PC-9 (cell line): ENCODE measurements at regions of chr3 and their contacts with region 1.

Region 1: DNA sequence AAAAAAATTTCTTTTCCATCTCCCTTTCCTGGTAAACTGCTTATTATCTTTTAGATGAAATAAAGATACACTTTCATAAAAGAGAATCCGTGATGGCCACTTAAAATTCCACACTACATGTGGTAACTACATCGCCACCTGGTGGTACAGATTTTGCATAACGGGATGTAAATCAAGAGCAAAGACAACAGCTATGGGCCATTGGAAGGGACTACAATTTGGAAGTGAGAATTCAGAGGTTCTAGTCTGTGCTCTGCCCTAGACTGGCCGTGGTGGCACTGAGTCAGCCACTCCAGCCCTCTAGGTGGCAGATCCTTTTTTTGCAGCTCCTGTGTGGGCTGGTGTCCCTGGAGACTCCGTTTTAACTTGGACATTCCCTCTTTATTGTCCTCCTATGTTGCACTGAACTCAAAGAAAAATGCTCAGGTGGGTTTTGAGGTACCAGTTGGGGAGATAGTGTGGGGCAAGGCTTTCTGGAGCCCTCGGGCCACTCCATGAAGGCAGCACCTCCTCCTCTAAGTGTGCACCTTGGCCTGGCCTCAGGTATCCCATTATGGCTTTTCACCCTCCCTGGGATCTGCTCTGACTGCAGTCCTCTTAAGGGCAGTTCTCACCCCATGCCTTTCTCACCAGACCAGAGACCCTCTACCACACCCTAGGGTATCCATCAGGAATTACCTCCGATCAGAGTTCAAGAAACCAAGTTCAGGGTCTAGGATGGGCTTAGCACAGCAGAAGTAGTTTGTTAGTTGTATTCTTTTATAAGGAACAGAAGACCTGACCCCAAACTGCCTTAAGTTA is 54.9 kb downstream of the SPSB4 start:
- DNase-seq: peak; percentile 44 to 45
- H3K4me3 ChIP-seq: no peak overlapping the region
- H3K27ac ChIP-seq: no peak overlapping the region
- H3K4me1 ChIP-seq: no peaks in the 10 kb centered on the region
- H3K27me3 ChIP-seq: peaks cover 11% of the 10 kb centered on the region; the same call in 1 of the 2 replicates
- CTCF ChIP-seq: peak; percentile 79

Region 2: DNA sequence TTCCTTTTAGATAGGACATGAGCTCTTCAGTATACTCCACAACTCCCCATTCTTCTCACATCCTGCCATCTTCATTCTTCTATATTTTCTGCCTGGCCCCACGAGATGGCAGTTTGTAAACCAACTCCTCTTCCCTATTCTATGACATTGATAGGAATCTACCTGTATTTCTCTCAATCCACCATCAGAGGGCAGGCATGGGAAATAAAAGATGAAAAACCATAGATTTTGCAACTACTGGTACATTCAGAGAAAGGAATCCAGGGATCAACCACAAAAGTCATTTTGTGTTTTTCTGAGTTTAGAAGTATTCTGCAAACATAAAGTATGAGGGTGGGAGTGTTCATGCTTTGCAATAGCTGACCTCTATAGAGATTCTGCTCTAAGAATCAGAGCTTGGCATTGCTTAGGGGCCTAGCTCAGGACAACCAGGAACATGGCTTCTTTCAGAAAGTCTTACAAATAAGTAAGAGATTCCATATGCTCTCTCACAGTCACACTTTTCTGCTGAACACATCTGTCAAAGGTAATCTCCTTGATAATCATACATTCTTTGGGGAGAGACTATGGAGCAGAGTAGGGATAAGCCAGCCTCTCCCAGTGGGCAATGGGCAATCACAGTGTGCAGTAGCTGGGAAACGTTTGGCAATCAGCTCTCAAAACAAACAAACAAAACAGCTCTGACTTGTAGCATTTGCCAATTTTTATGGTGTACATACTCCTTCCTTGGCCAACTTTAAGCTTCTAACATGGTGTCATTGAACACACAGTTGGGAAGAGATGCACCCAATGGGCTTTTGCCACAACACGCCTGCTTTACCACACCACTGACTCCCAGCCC is 207.5 kb before region 1 on chr3:
- CTCF ChIA-PET with region 1: no interaction called
- POLR2A ChIA-PET with region 1: no interaction called
- intact Hi-C with region 1: loop called (anchors 1 kb)
- DNase-seq: peak; percentile 16 to 66
- H3K4me3 ChIP-seq: no peak overlapping the region
- H3K27ac ChIP-seq: no peak overlapping the region
- H3K4me1 ChIP-seq: no peaks in the 10 kb centered on the region; the same call in 1 of the 2 replicates
- H3K27me3 ChIP-seq: no peaks in the 10 kb centered on the region
- CTCF ChIP-seq: peak; percentile 79

Region 3: DNA sequence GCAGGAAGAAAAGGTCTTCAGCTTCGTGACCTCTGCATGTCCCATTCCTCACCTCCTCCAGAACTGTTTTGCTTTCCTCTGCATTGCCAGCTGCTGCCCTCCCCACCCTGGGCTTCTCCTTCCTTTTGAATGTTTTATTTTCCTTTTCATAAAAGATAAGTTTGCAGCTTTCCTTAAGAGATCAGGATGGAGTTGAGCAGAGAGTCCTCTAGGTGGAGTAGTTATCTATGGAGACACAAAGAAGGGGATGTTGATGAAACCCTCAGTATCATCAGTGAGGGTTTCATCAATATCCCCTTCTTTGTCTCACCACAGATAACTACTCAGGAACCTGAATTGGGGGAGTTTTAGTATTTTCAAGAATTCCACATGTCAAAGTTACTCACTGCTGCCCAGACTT is 183.4 kb before region 1 on chr3:
- CTCF ChIA-PET with region 1: no interaction called
- POLR2A ChIA-PET with region 1: no interaction called
- intact Hi-C with region 1: loop called (anchors 1 kb)
- DNase-seq: no peak
- H3K4me3 ChIP-seq: no peak overlapping the region
- H3K27ac ChIP-seq: no peak overlapping the region
- H3K4me1 ChIP-seq: peaks cover 6% of the 10 kb centered on the region
- H3K27me3 ChIP-seq: no peaks in the 10 kb centered on the region
- CTCF ChIP-seq: peak; percentile 67

Region 4: DNA sequence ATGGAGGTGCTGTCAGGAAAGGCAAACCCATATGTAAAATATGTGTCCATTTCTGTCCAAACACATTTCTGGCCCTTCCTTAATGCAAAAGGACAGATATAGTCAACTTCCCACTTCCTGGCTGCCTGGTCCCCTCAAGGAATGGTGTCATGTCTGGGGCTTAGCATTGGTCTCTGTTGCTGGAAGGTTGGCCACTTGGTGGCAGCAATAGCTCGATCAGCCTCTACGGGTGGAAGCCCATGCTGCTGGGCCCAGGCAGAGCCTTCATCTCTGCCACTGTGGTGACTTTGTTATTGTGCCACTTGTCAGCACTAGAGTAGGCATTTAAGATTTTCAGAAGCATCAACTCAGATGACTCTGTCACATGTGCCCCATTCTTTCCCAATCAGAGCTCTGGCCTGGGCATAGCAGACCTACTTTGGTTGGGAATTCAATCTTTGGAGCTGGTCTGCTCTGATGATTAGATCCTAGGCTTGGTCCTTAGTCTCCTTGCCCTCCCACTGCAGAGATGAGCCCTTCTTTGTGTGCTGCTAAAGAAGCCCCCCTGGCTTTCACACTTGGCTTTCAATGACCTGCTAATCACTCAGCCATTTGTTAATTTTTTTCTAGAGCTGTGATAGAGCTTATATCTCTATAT is 105.9 kb before region 1 on chr3:
- CTCF ChIA-PET with region 1: no interaction called
- POLR2A ChIA-PET with region 1: no interaction called
- intact Hi-C with region 1: loop called (anchors 5 kb)
- DNase-seq: peak in 1 of 2 experiments; percentile 21
- H3K4me3 ChIP-seq: no peak overlapping the region
- H3K27ac ChIP-seq: no peak overlapping the region
- H3K4me1 ChIP-seq: no peaks in the 10 kb centered on the region
- H3K27me3 ChIP-seq: no peaks in the 10 kb centered on the region
- CTCF ChIP-seq: peak; percentile 64

Region 5: GRCh38 chr3:141275026-141275910 is 169.2 kb after region 1 on chr3:
- CTCF ChIA-PET with region 1: no interaction called
- POLR2A ChIA-PET with region 1: no interaction called
- intact Hi-C with region 1: no loop called
- DNase-seq: peak; percentile 48 to 98
- H3K4me3 ChIP-seq: peak overlapping the region; percentile 37; the same call in 1 of the 2 replicates
- H3K27ac ChIP-seq: peak overlapping the region; percentile 100
- H3K4me1 ChIP-seq: peaks cover 77% of the 10 kb centered on the region
- H3K27me3 ChIP-seq: no peaks in the 10 kb centered on the region
- CTCF ChIP-seq: no peak